ENCODE measurements at regions of chr3 and their contacts with region 1.

Region 1: DNA sequence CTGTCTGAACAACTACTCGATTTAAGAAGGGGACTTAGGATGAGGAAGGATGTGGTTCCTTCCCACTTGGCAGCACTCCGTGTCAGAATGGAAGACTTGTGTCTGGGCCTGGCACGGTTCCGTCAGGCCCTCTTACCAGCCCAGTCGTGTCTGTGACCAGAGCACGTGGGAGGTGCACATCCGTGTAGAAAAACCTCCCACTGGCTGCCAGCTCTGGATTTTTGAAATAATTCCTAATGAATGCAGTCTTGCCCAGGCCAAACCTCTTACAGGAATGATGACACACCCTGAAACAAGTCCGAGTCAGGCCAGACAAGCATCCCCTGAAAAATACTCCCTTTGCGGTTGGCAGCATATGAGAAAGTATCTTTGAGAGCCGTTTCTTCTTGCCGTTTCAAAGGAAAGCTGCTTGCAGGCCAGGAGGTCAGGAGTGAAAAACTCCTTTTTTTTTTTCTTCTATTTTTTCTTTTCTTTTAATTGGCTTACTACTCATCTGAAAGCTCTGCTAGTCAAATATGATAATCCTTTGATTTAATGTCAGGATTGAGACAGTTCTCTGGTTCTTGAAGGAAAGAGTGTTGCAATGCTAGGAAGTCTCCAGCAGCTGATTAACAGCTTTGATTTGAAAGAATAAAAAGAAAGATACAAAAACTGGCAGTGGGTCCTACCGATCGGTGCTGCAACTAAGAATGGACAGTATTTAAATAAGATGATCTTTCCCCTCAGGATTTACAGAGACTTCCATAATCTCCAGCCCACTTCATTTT is 19.8 kb downstream of the IL1RAP start:
- DNase-seq: peak; percentile 79
- ATAC-seq: peak; percentile 92
- H3K4me3 ChIP-seq: no peak overlapping the region
- H3K27ac ChIP-seq: peak overlapping the region; percentile 59
- H3K4me1 ChIP-seq: peaks cover 29% of the 10 kb centered on the region
- H3K27me3 ChIP-seq: no peaks in the 10 kb centered on the region
- CTCF ChIP-seq: no peak

Region 2: DNA sequence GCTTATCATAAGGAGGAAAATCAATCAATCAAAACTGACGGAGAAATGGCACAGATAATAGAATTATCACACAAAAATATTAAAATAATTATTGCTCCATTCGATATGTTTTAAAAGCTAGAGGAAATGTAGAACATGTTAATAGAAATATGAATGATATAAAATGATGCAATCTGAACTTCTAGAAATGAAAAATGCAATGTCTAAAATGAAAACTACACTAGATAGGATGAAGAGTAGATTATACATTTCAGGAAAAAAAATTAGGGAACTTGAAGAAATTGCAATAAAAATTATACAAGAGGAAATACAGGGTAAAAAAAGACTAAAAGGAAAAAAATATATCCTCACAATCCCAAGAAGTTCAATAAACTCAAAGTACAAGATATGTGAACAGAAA is 982.7 kb before region 1 on chr3:
- CTCF ChIA-PET with region 1: no interaction called
- POLR2A ChIA-PET with region 1: no interaction called
- intact Hi-C with region 1: no loop called
- DNase-seq: no peak
- ATAC-seq: no peak
- H3K4me3 ChIP-seq: no peak overlapping the region
- H3K27ac ChIP-seq: no peak overlapping the region
- H3K4me1 ChIP-seq: no peaks in the 10 kb centered on the region
- H3K27me3 ChIP-seq: no peaks in the 10 kb centered on the region
- CTCF ChIP-seq: no peak

Region 3: GRCh38 chr3:190552969-190553759 is 19.5 kb after region 1 on chr3:
- CTCF ChIA-PET with region 1: no interaction called
- POLR2A ChIA-PET with region 1: interaction called, 10 read pairs
- intact Hi-C with region 1: no loop called
- DNase-seq: no peak
- ATAC-seq: no peak
- H3K4me3 ChIP-seq: no peak overlapping the region
- H3K27ac ChIP-seq: no peak overlapping the region
- H3K4me1 ChIP-seq: no peaks in the 10 kb centered on the region
- H3K27me3 ChIP-seq: no peaks in the 10 kb centered on the region
- CTCF ChIP-seq: no peak

Region 4: GRCh38 chr3:190566043-190566933 is 32.6 kb after region 1 on chr3:
- CTCF ChIA-PET with region 1: no interaction called
- POLR2A ChIA-PET with region 1: no interaction called
- intact Hi-C with region 1: loop called (anchors 5 kb)
- DNase-seq: peak; percentile 99
- ATAC-seq: peak; percentile 97
- H3K4me3 ChIP-seq: peak overlapping the region; percentile 22; the same call in 1 of the 2 replicates
- H3K27ac ChIP-seq: peak overlapping the region; percentile 88
- H3K4me1 ChIP-seq: peaks cover 29% of the 10 kb centered on the region
- H3K27me3 ChIP-seq: no peaks in the 10 kb centered on the region
- CTCF ChIP-seq: no peak

Measured in PC-3 (cell line).